PC-9 (cell line): ENCODE measurements at regions of chr14 and their contacts with region 1.

Region 1: DNA sequence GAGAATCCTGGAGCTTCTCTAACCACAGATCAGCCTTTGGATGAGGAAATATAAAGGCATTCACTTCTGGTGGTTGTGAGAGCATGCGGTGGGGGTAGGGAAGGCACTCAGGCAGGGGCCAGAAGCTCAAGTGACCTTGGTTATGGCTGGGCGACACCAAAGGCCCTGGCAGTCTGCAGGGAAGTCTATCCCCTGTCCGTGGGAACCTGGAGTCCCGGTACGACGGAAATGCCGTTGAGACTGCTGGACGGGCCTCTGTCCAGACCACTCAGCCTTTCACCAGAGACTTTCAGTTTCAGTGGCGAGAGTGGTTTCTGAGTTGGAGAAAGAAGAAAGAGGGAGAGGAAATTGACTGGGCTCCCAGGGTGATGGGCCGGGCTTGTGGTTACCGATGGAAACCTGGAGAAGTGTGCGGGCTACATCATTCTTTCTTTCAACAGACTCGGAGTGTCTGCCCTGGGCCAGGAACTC is 20.9 kb downstream of the ISCA2 start:
- DNase-seq: peak in 1 of 2 experiments; percentile 78
- H3K4me3 ChIP-seq: no peak overlapping the region
- H3K27ac ChIP-seq: no peak overlapping the region
- H3K4me1 ChIP-seq: peaks cover 8% of the 10 kb centered on the region
- H3K27me3 ChIP-seq: no peaks in the 10 kb centered on the region
- CTCF ChIP-seq: no peak

Region 2: DNA sequence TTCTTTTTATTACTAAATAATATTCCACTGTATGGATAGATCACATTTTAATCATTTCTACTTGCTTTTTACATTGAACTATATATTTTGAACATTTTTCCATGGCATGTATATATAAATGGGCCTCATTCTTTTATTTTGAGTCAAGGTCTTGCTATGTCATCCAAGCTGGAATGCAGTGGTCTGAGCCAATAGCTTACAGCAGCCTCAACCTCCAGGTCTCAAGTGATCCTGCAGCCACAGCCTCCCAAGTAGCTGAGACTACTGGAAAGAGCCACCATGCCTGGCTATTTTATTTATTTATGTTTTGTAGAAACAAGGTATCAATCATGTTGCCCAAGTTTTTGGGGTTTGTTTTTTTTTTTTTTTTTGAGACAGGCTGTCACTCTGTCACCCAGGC is 206.0 kb after region 1 on chr14:
- CTCF ChIA-PET with region 1: no interaction called
- POLR2A ChIA-PET with region 1: interaction called, 24 read pairs
- intact Hi-C with region 1: no loop called
- DNase-seq: no peak
- H3K4me3 ChIP-seq: no peak overlapping the region
- H3K27ac ChIP-seq: no peak overlapping the region
- H3K4me1 ChIP-seq: no peaks in the 10 kb centered on the region
- H3K27me3 ChIP-seq: no peaks in the 10 kb centered on the region
- CTCF ChIP-seq: no peak

Region 3: DNA sequence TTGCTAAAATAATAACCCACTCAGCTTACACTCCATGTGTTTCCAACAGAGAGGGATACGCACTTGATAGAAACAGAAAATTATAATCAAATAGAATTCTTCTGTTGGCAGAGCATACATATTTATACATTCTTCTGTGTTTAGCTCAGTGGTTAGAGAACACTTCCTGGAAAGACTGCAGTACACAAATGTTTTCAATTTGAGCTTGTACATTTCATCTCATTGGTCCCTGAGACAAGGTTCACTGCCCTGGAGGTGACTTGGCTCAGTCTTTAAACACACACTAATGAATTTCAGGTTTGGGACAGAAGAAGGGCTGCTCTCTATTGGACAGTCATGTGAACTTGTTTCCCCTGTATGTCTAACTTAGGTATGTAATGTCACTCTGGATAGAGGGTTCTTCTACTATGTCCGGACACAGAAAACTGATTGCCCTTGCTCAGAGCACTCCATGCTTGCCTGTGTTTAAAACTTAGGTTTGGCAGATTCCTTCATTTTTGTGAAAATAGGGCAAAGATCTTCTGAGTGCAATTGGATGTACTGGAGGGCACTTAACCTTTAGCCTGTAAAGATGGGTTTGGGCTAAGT is 338.5 kb after region 1 on chr14:
- CTCF ChIA-PET with region 1: interaction called, 20 read pairs
- POLR2A ChIA-PET with region 1: no interaction called
- intact Hi-C with region 1: no loop called
- DNase-seq: peak in 1 of 2 experiments; percentile 55
- H3K4me3 ChIP-seq: no peak overlapping the region
- H3K27ac ChIP-seq: no peak overlapping the region
- H3K4me1 ChIP-seq: peaks cover 20% of the 10 kb centered on the region
- H3K27me3 ChIP-seq: no peaks in the 10 kb centered on the region
- CTCF ChIP-seq: no peak